BJ (cell line): ENCODE measurements at regions of chr2 and their contacts with region 1.

Region 1: DNA sequence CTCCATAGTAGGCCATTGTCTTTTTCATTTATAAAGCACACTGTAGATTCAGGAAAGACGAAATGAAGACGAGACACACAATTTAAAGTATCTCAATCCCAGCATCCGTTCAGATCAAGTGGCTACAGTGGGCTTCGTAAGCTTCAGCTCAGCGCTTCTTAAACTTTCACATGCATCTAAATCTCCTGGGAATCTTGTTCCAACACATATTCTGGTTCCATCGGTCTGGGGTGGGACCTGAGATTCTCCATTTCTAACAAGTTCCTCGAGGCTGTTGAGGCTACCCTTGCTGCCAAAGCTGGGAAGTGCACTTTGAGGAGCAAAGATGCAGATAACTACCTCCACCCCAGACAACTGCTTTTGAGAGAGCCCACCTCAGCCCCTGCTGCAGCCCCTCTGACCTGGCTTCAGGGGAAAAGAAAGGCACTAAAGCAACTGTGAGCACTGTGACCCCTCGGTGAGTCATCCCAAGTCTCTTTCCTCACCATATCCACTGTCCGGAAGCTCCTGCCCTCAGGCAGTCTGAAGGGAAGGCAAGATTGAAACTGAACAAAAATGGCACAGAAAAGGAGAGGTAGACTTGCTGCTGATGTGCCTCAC is 201.1 kb upstream of the FBXO11 start:
- DNase-seq: no peak
- H3K4me3 ChIP-seq: no peak overlapping the region
- H3K27me3 ChIP-seq: no peaks in the 10 kb centered on the region
- CTCF ChIP-seq: no peak

Region 2: DNA sequence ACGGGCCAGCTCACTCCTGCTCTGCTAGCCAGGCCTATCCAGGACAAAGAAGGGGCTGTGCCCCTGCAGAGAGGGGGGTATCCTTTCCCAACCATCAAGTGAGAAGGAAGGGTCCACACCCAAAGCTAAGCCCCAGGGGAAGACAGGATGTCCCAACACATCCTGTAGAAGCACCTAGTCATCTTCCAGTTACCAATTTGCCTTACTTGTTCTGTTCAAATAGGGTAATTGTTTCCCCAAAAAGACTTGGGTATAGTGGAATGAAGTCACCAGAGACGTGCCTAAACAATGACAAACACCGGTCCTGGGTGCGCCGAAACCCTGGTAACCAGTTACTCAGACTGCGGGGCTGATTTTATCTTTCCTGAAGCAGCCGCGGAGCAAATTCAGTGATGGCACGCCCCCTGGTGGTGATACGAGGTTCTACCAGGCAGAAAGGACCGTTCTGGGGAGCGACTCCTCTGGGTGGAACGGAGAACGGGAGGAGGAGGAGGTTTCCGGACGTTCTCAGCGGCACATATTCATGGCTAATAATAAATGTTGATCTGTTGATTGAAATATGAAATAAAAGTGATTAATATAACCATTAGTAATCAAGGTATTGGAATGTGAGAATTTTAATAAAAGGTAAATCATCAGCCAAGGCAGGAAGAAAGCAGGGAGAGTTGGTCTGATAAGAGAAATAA is 313.2 kb after region 1 on chr2:
- CTCF ChIA-PET with region 1: interaction called, 17 read pairs
- POLR2A ChIA-PET with region 1: interaction called, 5 read pairs
- DNase-seq: peak; percentile 70
- H3K4me3 ChIP-seq: no peak overlapping the region
- H3K27me3 ChIP-seq: no peaks in the 10 kb centered on the region
- CTCF ChIP-seq: peak; percentile 97